Activated T-helper 2 cell treated with anti-CD3 and anti-CD28 coated beads, Interferon-gamma antibody, Interleukin-2, Interleukin-4, amounts not matched to agents 10 μg/mL and 5 μg/mL and 100 μg/mL, durations not matched to agents 14 hours and 24 hours and 36 hours (primary cell): ENCODE measurements at regions of chr18 and their contacts with region 1.

Region 1: GRCh38 chr18:70195852-70196434 is 9.5 kb downstream of the RTTN start:
- DNase-seq: no peak
- H3K4me3 Mint-ChIP-seq: no peak overlapping the region
- H3K27ac Mint-ChIP-seq: no peak overlapping the region
- H3K4me1 Mint-ChIP-seq: peaks cover 23% of the 10 kb centered on the region
- H3K27me3 Mint-ChIP-seq: no peaks in the 10 kb centered on the region

Region 2: DNA sequence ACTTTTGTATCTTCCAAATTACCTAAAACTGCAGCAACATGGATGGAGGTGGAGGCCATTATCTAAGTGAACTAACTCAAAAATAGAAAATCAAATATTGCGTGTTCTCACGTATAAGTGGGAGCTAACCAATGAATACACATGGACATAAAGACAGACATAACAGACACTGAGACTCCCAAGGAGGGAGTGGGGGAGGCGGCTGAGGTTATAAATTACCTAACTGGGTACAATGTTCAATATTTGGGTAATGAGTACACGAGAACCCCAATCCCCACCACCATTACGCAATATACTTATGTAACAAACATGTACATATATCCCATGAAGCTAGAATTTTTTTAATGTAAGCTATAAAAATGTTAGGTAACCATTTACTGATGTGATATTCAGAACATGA is 110.3 kb before region 1 on chr18:
- intact Hi-C with region 1: no loop called
- DNase-seq: no peak
- H3K4me3 Mint-ChIP-seq: no peak overlapping the region
- H3K27ac Mint-ChIP-seq: no peak overlapping the region
- H3K4me1 Mint-ChIP-seq: no peaks in the 10 kb centered on the region
- H3K27me3 Mint-ChIP-seq: no peaks in the 10 kb centered on the region

Region 3: GRCh38 chr18:70234663-70235459 is 38.9 kb after region 1 on chr18:
- intact Hi-C with region 1: no loop called
- DNase-seq: no peak
- H3K4me3 Mint-ChIP-seq: no peak overlapping the region
- H3K27ac Mint-ChIP-seq: no peak overlapping the region
- H3K4me1 Mint-ChIP-seq: no peaks in the 10 kb centered on the region
- H3K27me3 Mint-ChIP-seq: peaks cover 3% of the 10 kb centered on the region

Region 4: DNA sequence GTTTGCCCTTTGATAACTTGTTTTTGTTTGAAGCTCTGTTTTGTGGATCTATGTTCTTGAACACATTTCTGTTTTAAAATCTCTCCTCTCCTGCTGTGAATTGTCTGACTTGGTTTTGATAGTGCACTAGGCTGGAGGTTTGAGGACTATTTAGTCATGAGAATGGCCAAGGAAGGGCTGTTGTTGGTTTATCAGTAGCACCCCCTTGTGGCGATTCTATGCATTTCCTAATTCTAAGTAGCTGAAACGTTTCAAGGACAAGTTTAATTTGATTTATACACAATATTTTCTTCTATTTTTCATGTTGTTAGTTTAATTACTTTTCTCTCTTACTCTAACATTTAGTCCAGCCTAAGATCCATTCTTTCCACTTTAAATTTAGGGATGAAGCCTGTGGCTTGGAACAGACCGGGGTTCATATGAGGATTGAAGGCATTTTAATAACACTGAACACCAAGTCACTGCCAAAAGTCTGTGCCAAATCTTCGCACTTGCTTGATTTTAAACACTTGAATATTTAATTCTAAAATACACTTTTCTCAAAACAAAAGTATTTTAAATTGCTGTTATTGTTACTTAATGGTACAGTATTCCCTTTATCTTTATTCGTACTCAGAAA is 258.9 kb after region 1 on chr18:
- intact Hi-C with region 1: loop called (anchors 2 kb)
- DNase-seq: no peak
- H3K4me3 Mint-ChIP-seq: no peak overlapping the region
- H3K27ac Mint-ChIP-seq: no peak overlapping the region
- H3K4me1 Mint-ChIP-seq: no peaks in the 10 kb centered on the region
- H3K27me3 Mint-ChIP-seq: peaks cover 2% of the 10 kb centered on the region